MCF 10A (cell line): ENCODE measurements at regions of chr10 and their contacts with region 1.

Region 1: DNA sequence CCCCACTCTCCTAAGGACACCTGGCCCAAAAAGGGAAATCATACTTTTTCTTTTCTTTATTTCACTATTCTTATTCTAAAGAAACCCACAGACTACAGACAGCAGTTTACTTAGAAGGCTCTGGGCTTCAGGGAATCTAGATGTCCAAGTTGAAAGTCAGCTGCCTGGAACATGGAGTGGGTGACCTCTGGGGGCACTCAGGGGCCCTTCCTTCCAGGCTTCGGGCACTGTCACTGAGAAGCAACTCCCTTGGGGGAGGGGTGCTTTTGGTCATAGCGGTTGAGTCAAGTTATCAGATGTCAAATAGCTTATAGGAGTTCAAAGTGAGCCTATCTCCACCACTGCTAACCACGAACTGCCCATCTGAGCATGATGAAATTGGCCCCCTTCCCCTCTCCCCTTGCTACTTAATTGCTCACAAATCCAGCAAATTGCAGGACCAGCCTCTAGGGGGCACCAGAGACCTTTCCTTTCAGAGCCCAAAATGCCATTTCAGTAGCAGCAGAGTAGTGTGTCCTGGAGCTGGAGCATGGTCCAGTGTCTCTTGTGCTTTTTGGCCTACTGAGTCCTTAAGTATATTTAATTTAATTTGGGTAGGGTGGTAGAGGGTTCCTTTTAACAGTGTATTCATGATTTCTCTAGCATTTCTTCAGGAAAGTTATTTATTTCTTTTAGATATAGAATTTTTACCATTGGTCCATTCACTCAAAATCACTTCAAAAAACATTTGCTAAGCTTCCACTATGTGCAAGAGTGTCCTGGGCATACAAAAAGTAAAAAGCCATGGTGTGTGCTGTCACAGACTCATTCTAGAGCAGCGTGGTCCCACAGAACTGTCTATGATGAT is 463.8 kb downstream of the KCNMA1 start:
- DNase-seq: peak; percentile 77
- H3K4me3 Mint-ChIP-seq: no peak overlapping the region
- H3K27ac Mint-ChIP-seq: no peak overlapping the region
- H3K4me1 Mint-ChIP-seq: peaks cover 5% of the 10 kb centered on the region
- H3K27me3 Mint-ChIP-seq: no peaks in the 10 kb centered on the region
- CTCF ChIP-seq: peak; percentile 89

Region 2: GRCh38 chr10:77196614-77197013 is 22.8 kb after region 1 on chr10:
- CTCF ChIA-PET with region 1: interaction called, 10 read pairs
- POLR2A ChIA-PET with region 1: no interaction called
- intact Hi-C with region 1: no loop called
- DNase-seq: no peak
- H3K4me3 Mint-ChIP-seq: no peak overlapping the region
- H3K27ac Mint-ChIP-seq: no peak overlapping the region
- H3K4me1 Mint-ChIP-seq: no peaks in the 10 kb centered on the region
- H3K27me3 Mint-ChIP-seq: no peaks in the 10 kb centered on the region
- CTCF ChIP-seq: no peak

Region 3: DNA sequence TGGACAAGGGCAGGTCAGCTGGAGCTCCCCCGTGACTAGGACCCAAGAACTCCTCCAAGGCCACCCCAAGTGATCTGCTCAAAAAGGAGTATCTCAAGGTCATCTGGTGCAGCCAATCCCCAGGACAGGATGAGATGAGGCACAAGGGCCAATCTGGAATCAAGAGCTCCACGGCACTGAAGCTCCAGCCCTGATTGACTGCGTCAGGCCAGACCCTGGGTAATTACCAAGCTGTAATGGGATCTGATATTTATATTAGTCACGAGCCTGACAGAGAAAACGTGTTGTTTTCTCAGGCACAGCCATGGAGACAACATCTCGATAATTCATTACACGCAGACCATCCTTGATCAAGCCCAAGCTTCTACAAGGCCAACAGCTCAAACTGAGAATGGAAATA is 459.5 kb after region 1 on chr10:
- CTCF ChIA-PET with region 1: interaction called, 267 read pairs
- POLR2A ChIA-PET with region 1: no interaction called
- intact Hi-C with region 1: no loop called
- DNase-seq: no peak
- H3K4me3 Mint-ChIP-seq: no peak overlapping the region
- H3K27ac Mint-ChIP-seq: no peak overlapping the region
- H3K4me1 Mint-ChIP-seq: peaks cover 12% of the 10 kb centered on the region
- H3K27me3 Mint-ChIP-seq: no peaks in the 10 kb centered on the region
- CTCF ChIP-seq: no peak

Region 4: GRCh38 chr10:77649333-77650331 is 475.8 kb after region 1 on chr10:
- CTCF ChIA-PET with region 1: interaction called, 267 read pairs
- POLR2A ChIA-PET with region 1: no interaction called
- intact Hi-C with region 1: no loop called
- DNase-seq: no peak
- H3K4me3 Mint-ChIP-seq: no peak overlapping the region
- H3K27ac Mint-ChIP-seq: no peak overlapping the region
- H3K4me1 Mint-ChIP-seq: peaks cover 5% of the 10 kb centered on the region
- H3K27me3 Mint-ChIP-seq: no peaks in the 10 kb centered on the region
- CTCF ChIP-seq: no peak

Region 5: GRCh38 chr10:77756319-77757232 is 582.7 kb after region 1 on chr10:
- CTCF ChIA-PET with region 1: interaction called, 4 read pairs
- POLR2A ChIA-PET with region 1: no interaction called
- intact Hi-C with region 1: loop called (anchors 1 kb)
- DNase-seq: peak; percentile 80
- H3K4me3 Mint-ChIP-seq: no peak overlapping the region
- H3K27ac Mint-ChIP-seq: no peak overlapping the region
- H3K4me1 Mint-ChIP-seq: peaks cover 38% of the 10 kb centered on the region
- H3K27me3 Mint-ChIP-seq: no peaks in the 10 kb centered on the region
- CTCF ChIP-seq: peak; percentile 81